ENCODE measurements at regions of chr19 and their contacts with region 1.

Region 1: DNA sequence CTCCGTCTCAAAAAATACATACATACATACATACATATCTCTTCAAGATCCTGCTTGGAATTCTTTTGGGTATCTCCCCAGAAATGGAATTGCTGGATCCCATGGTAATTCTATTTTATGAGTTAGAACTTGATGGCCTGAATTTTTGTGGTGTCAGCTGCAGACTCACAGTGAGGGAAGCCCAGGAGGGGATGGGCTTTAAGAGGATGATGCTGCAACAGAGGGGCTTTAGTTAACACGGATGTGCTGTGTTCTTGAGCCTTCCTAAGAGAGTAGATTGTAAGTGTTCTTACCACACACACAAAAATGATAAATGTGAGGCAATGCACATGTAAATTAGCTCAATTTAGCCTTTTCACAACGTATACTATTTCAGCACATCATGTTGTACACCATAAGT is 31.8 kb downstream of the CACNG6 start:
- DNase-seq: no peak
- ATAC-seq: no peak
- H3K4me3 Mint-ChIP-seq: no peak overlapping the region
- H3K27ac Mint-ChIP-seq: no peak overlapping the region
- H3K4me1 Mint-ChIP-seq: peaks cover 4% of the 10 kb centered on the region
- H3K27me3 Mint-ChIP-seq: peaks cover 29% of the 10 kb centered on the region

Region 2: GRCh38 chr19:53772943-53773342 is 250.2 kb before region 1 on chr19:
- CTCF ChIA-PET with region 1: interaction called, 4 read pairs
- POLR2A ChIA-PET with region 1: no interaction called
- intact Hi-C with region 1: loop called in 1 of 2 experiments (anchors 1 kb)
- DNase-seq: peak; percentile 72
- ATAC-seq: no peak
- H3K4me3 Mint-ChIP-seq: no peak overlapping the region
- H3K27ac Mint-ChIP-seq: no peak overlapping the region
- H3K4me1 Mint-ChIP-seq: no peaks in the 10 kb centered on the region
- H3K27me3 Mint-ChIP-seq: peaks cover 2% of the 10 kb centered on the region

Region 3: DNA sequence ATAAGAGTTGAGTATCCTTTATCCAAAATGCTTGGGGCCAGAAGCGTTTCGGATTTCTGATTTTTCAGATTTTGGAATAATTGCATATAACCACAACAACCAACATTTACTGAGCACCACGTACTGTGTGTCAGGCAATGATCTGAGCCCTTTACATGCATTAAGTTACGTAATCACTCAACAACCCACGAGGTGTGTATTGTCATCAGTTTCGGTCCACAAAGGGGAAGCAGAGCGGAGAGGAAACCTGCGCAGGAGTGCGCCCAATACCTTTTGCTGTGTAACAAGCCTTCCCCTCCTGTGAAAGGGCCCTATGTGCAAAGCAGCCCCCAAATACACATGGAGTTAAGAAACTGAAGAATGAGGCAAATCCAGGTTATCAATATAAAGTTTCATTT is 178.3 kb before region 1 on chr19:
- CTCF ChIA-PET with region 1: interaction called, 11 read pairs
- POLR2A ChIA-PET with region 1: no interaction called
- intact Hi-C with region 1: loop called (anchors 1 kb)
- DNase-seq: no peak
- ATAC-seq: no peak
- H3K4me3 Mint-ChIP-seq: no peak overlapping the region
- H3K27ac Mint-ChIP-seq: no peak overlapping the region
- H3K4me1 Mint-ChIP-seq: peaks cover 5% of the 10 kb centered on the region
- H3K27me3 Mint-ChIP-seq: peaks cover 17% of the 10 kb centered on the region

Region 4: GRCh38 chr19:53853707-53854106 is 169.5 kb before region 1 on chr19:
- CTCF ChIA-PET with region 1: interaction called, 6 read pairs
- POLR2A ChIA-PET with region 1: no interaction called
- intact Hi-C with region 1: loop called in 1 of 2 experiments (anchors 1 kb)
- DNase-seq: no peak
- ATAC-seq: peak; percentile 49
- H3K4me3 Mint-ChIP-seq: no peak overlapping the region
- H3K27ac Mint-ChIP-seq: no peak overlapping the region
- H3K4me1 Mint-ChIP-seq: peaks cover 4% of the 10 kb centered on the region
- H3K27me3 Mint-ChIP-seq: peaks cover 15% of the 10 kb centered on the region